BJ (cell line): ENCODE measurements at regions of chr22 and their contacts with region 1.

Region 1: GRCh38 chr22:38733329-38733723 is 22.5 kb downstream of the SUN2 start:
- DNase-seq: no peak
- H3K4me3 ChIP-seq: no peak overlapping the region
- H3K27me3 ChIP-seq: no peaks in the 10 kb centered on the region
- CTCF ChIP-seq: peak; percentile 77

Region 2: GRCh38 chr22:38744981-38745380 is 11.7 kb after region 1 on chr22:
- CTCF ChIA-PET with region 1: interaction called, 16 read pairs
- POLR2A ChIA-PET with region 1: no interaction called
- DNase-seq: no peak
- H3K4me3 ChIP-seq: no peak overlapping the region
- H3K27me3 ChIP-seq: no peaks in the 10 kb centered on the region
- CTCF ChIP-seq: no peak